PC-9 (cell line): ENCODE measurements at regions of chr1 and their contacts with region 1.

Region 1: GRCh38 chr1:21176586-21177555 is at the start of gene EIF4G3:
- DNase-seq: peak; percentile 88 to 97
- H3K4me3 ChIP-seq: peak within 1 kb of the TSS; percentile 64
- H3K27ac ChIP-seq: peak within 1 kb of the TSS; percentile 85
- H3K4me1 ChIP-seq: peaks cover 6% of the 10 kb centered on the region; the same call in 1 of the 2 replicates
- H3K27me3 ChIP-seq: no peaks in the 10 kb centered on the region
- CTCF ChIP-seq: no peak
- total RNA-seq, gene EIF4G3: 52.6 and 63.2 TPM in 2 replicates

Region 2: DNA sequence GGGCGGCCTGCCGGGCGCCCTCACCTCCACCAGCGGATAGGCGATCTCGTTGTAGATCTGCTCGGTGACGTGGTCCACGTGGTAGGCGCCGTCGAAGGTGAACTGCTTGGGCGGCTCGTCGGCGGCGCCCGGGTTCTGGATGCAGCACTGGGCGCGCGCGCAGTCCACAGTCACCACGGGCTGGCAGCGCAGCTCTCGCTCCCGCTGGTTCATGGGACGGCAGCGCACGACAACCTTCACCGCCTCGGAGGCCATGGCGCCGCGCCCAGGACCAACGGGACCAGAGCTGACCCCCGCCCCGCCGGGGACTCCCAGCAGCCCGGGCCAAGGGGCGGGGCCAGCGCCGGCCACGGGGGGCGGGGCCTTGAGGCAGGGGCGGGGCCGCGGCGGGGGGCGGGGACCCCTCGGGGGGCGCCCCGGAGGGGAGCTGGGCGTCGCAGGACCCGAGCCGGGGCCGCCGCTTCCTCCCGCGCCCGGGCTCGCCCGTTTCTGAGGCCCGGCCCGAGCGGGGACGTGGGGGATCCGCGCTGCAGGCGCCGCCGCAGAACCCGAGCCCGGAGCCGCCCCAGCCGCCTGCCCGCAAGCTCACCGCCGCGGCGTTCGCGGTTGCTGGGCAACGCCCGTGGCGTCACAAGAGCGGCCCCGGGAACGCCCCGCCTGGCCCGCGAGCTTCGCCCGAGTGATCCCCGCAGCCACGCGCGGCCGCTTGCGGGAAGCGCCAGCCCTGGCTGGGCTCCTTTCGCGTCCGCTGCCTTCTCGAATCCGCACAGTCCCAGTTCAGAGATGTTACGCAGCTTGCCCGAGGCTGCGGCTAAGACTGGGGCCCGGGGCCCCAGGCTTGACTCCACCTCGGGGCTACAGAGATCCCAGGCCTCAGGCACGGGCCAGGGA is 459.2 kb before region 1 on chr1 and contains the start of gene KIF17:
- CTCF ChIA-PET with region 1: no interaction called
- POLR2A ChIA-PET with region 1: interaction called, 16 read pairs
- intact Hi-C with region 1: no loop called
- DNase-seq: peak in 1 of 2 experiments; percentile 76
- H3K4me3 ChIP-seq: peak within 1 kb of the TSS; percentile 42; the same call in 1 of the 2 replicates
- H3K27ac ChIP-seq: no peak within 1 kb of the TSS
- H3K4me1 ChIP-seq: no peaks in the 10 kb centered on the region
- H3K27me3 ChIP-seq: no peaks in the 10 kb centered on the region
- CTCF ChIP-seq: no peak
- total RNA-seq, gene KIF17: 1.2 and 1.7 TPM in 2 replicates

Region 3: DNA sequence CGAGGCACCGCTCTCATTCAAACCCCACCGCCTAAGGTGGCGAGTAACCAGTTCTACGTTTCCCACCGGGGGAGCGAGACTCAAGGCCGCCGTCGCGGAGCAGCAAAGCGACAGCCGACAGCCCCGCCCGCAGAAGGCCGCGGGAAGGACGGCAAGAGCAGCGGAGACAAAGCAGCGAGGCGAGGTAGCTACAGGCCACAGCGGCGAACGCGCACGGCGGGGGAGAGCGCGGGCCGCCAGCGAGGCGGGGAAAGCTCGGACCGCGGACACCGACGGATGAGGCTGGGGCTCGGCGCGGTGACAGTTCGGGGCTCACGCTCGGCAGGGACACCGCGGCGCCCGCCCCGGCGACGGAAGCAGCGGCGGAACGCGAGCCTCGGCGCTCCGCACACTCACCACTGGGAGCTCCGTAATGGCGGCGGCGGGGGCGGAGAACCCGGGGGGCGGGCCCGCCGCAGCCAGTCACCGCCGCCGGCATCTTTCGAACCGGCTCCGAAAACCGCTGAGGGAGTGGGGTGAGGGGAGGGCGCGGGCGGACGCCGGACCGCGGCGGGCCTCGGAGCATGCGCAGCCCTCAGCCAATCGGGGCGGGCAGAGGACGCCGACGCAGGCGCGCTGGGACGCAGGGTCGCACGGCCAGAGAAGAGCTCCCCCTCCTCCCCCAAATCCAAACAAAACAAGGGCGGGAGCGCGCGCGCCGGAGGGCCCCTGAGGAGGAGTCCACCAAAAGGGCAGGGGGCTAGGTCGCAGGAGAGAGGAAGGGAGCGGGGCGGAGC is 390.4 kb before region 1 on chr1:
- CTCF ChIA-PET with region 1: no interaction called
- POLR2A ChIA-PET with region 1: interaction called, 4 read pairs
- intact Hi-C with region 1: loop called (anchors 10 kb)
- DNase-seq: peak; percentile 78 to 97
- H3K4me3 ChIP-seq: peak overlapping the region; percentile 98
- H3K27ac ChIP-seq: peak overlapping the region; percentile 59
- H3K4me1 ChIP-seq: peaks cover 19% of the 10 kb centered on the region; the same call in 1 of the 2 replicates
- H3K27me3 ChIP-seq: no peaks in the 10 kb centered on the region
- CTCF ChIP-seq: no peak